ENCODE measurements at regions of chr22 and their contacts with region 1.

Region 1: GRCh38 chr22:30763815-30764686 is 69.4 kb downstream of the OSBP2 start:
- DNase-seq: peak in 6 of 10 donors; percentile 48 to 90 (median 53)

Region 2: GRCh38 chr22:30920407-30920806 is 156.4 kb after region 1 on chr22:
- intact Hi-C with region 1: loop called (anchors 1 kb)
- DNase-seq: peak; percentile 66 to 97 (median 88)